ENCODE measurements at regions of chr2 and their contacts with region 1.

Region 1: DNA sequence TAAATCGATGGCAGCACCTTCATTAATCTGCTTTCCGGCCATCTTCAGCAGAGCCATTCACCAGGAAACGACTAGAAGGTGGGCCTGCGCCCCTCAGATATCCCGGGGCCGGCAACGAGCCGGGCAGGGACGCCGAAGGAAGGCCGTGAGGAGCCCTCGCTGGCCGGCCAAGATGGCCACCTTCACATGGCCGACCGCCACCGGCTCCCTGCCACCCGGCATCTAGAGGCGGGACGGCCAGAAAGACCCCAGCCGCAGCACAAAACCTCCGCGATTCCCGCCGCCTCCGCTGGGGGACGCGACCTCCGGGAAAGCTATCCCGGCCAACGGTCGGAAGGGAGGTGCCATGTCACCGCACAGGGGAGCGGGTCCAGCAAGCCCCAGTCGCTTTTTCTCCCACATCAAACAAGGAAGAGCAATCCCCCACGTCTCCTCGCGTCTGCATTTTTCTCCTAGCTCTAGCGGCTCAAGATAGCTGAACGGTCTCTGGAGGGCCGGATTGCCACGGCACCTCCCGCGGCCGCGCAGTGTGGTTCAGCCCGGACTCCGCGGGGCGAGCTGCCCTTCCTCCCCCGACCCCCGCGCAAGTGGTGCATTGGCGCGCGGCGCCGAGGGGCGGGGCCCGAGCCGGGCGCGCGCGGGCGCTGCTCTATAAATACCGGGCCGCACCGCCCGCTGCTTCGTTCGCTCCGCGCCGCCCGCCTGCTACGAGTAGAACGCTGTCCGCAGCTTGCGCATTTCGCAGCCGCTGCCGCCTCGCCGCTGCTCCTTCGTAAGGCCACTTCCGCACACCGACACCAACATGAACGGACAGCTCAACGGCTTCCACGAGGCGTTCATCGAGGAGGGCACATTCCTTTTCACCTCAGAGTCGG is at the start of gene MAT2A:
- H3K4me3 ChIP-seq: peak within 1 kb of the TSS; percentile 98
- H3K27ac ChIP-seq: peak within 1 kb of the TSS; percentile 99
- H3K4me1 ChIP-seq: 0 out of 2 replicates have a peak, but pooled peaks cover 2% of the 10 kb centered on the region
- CTCF ChIP-seq: peak; percentile 96

Region 2: DNA sequence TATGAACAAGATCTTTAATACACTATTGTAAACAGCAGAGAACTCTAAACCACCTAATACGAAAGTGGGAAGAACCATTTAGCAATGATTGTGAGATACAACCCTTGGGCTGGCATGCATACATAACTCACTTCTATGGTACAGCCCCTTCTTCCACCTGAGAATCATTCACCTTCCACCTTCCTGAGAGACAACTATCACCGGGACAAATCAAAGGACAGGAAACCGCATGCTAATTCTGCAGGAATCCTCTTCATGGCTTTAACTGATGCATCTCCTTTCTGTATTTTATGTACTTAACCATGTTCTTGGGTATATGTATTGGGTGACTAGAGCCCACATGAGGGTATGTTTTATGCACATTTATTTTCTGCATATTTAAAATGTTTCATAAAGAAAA is 781.1 kb before region 1 on chr2:
- CTCF ChIA-PET with region 1: no interaction called
- POLR2A ChIA-PET with region 1: no interaction called
- H3K4me3 ChIP-seq: no peak overlapping the region
- H3K27ac ChIP-seq: no peak overlapping the region
- H3K4me1 ChIP-seq: no peaks in the 10 kb centered on the region
- CTCF ChIP-seq: no peak

Region 3: GRCh38 chr2:85420536-85421259 is 118.0 kb before region 1 on chr2:
- CTCF ChIA-PET with region 1: interaction called, 73 read pairs
- POLR2A ChIA-PET with region 1: interaction called, 87 read pairs
- H3K4me3 ChIP-seq: no peak overlapping the region
- H3K27ac ChIP-seq: no peak overlapping the region
- H3K4me1 ChIP-seq: peaks cover 4% of the 10 kb centered on the region
- CTCF ChIP-seq: peak; percentile 97

Region 4: GRCh38 chr2:85445316-85446295 is 93.1 kb before region 1 on chr2:
- CTCF ChIA-PET with region 1: no interaction called
- POLR2A ChIA-PET with region 1: interaction called, 56 read pairs
- H3K4me3 ChIP-seq: no peak overlapping the region
- H3K27ac ChIP-seq: peak overlapping the region; percentile 68
- H3K4me1 ChIP-seq: no peaks in the 10 kb centered on the region; the same call in 1 of the 2 replicates
- CTCF ChIP-seq: no peak

Region 5: GRCh38 chr2:85504778-85505323 is 33.9 kb before region 1 on chr2:
- CTCF ChIA-PET with region 1: no interaction called
- POLR2A ChIA-PET with region 1: interaction called, 22 read pairs
- H3K4me3 ChIP-seq: no peak overlapping the region
- H3K27ac ChIP-seq: no peak overlapping the region
- H3K4me1 ChIP-seq: no peaks in the 10 kb centered on the region
- CTCF ChIP-seq: no peak

Region 6: DNA sequence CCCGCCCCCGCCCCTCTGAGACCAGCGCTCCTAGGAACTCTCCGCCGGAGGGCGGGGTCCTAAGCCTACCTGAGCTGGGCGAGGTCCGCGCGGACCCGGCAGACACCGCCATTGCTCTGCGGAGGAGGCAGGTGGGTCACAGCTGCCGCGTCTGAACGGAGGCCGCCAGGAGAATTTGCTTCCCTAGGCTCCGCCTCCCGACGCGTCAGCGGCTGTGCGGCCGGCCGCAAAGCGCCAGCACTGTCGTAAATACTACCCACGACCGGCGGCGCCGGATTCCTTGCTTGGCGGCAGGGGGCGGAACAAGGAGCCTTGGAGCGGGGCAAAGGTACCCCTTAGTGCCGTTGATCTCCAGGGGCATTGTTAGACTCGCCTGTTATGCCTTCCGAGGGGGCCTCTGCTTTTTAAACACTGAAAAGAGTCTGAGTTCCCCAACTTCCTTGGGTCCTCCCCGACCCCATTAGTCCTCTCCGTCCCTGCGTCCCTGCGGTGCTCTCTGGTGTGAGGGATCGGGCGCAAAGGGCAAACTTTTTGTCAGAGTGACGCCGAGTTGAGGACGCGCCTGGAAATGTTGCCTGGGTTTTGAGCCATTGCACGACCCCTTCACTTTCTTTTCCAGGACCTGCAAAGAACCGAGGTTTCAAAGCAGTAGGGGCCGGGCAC is 22.7 kb after region 1 on chr2 and contains the start of gene GGCX:
- CTCF ChIA-PET with region 1: interaction called, 3 read pairs
- POLR2A ChIA-PET with region 1: interaction called, 106 read pairs
- H3K4me3 ChIP-seq: peak within 1 kb of the TSS; percentile 80
- H3K27ac ChIP-seq: peak within 1 kb of the TSS; percentile 47
- H3K4me1 ChIP-seq: no peaks in the 10 kb centered on the region
- CTCF ChIP-seq: no peak; the same call in 1 of the 2 replicates